Endothelial cell of umbilical vein (primary cell): ENCODE measurements at regions of chr2 and their contacts with region 1.

Region 1: DNA sequence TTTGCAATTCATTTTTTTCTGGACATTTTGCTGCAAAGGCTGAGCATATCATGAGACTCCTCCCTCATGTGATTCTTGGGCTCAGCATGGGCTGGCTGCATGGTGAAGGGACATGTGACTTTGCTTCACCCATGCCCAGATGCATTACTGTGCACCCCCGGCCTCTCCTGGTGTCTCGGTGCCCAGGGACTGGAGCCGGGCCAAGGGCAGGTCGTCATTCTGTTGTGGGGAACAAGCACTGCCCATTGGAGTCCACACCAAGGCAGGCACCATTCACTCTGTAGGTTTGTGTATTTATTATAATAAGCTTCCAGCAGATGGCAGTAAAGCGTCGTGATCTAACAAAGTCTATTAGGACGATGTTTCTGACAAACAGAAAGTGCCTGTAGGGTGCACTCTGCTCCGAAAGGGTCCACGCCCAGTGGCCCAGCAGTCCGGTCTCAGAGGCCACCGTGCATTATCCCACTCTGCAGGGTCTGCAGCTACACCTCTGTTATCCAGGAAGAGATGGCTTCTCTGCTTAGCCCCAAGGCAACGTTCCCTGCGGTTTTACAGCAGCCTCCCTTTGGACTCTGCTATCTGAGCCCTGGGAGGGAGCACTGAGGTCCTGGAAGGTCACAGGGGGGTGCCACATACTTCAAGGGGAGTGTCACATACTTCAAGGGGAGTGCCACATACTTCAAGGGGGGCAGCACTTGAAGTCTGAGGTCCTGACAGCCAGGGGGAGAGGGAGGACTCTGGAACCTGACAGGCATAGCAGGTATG is 219.6 kb downstream of the TSN start:
- DNase-seq: peak; percentile 60
- H3K4me3 ChIP-seq: no peak overlapping the region
- H3K27ac ChIP-seq: no peak overlapping the region
- H3K4me1 ChIP-seq: no peaks in the 10 kb centered on the region
- H3K27me3 ChIP-seq: peaks cover 0 to under 1% of the 10 kb centered on the region in 2 experiments
- CTCF ChIP-seq: peak; percentile 29 to 36
- POLR2A ChIP-seq: no peak

Region 2: GRCh38 chr2:121897335-121897970 is 77.6 kb before region 1 on chr2:
- CTCF ChIA-PET with region 1: no interaction called
- POLR2A ChIA-PET with region 1: no interaction called
- dilution Hi-C with region 1: no loop called
- intact Hi-C with region 1: loop called (anchors 5 kb)
- DNase-seq: peak; percentile 20
- H3K4me3 ChIP-seq: no peak overlapping the region
- H3K27ac ChIP-seq: peak overlapping the region; percentile 73
- H3K4me1 ChIP-seq: peaks cover 12% of the 10 kb centered on the region
- H3K27me3 ChIP-seq: no peaks in the 10 kb centered on the region
- CTCF ChIP-seq: peak; percentile 48 to 72
- POLR2A ChIP-seq: no peak

Region 3: DNA sequence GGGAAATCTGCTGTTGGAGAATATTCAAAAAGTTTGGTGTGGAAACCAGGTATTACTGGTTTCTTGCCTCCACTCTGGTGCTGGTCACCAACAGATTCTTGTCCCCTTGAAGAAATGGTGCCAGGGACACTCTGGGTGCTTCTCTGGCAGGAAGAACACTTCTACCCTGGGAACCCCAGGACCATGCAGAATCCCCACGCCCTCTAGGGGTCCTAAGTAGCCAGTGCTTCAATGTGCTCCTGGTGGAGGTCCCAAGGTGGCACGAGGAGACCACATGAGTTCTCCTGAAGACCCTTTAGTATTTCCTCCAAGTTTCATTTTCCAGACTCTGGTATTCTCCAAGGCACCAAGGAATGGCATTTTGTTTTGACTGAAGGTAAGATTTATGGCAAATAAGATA is 161.0 kb after region 1 on chr2:
- CTCF ChIA-PET with region 1: no interaction called
- POLR2A ChIA-PET with region 1: no interaction called
- dilution Hi-C with region 1: no loop called
- intact Hi-C with region 1: loop called (anchors 2 kb)
- DNase-seq: no peak
- H3K4me3 ChIP-seq: no peak overlapping the region
- H3K27ac ChIP-seq: no peak overlapping the region
- H3K4me1 ChIP-seq: no peaks in the 10 kb centered on the region
- H3K27me3 ChIP-seq: no peaks in the 10 kb centered on the region
- CTCF ChIP-seq: peak in 1 of 2 donors; percentile 58
- POLR2A ChIP-seq: no peak

Region 4: GRCh38 chr2:122156176-122156890 is 181.3 kb after region 1 on chr2:
- CTCF ChIA-PET with region 1: no interaction called
- POLR2A ChIA-PET with region 1: no interaction called
- dilution Hi-C with region 1: no loop called
- intact Hi-C with region 1: no loop called
- DNase-seq: no peak
- H3K4me3 ChIP-seq: no peak overlapping the region
- H3K27ac ChIP-seq: no peak overlapping the region
- H3K4me1 ChIP-seq: no peaks in the 10 kb centered on the region
- H3K27me3 ChIP-seq: no peaks in the 10 kb centered on the region
- CTCF ChIP-seq: no peak
- POLR2A ChIP-seq: no peak

Region 5: DNA sequence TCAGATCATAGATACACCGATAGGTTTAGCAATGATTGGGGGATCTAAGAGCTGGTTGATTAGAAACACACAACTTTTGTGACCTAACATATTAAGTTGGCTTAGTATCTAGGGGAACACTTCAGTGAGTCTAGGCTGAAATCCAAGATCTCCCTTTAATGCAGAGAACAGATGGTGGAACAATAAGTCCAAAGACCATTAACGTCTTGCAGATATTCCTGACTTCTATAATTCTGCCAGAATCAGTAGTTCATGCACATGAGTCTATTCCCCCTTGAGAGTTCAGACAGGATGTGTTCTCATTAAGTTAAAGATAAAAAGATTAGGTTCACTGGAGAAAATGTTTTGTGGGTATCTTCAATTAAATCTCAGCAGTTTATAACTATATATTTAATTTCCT is 286.8 kb after region 1 on chr2:
- CTCF ChIA-PET with region 1: no interaction called
- POLR2A ChIA-PET with region 1: no interaction called
- dilution Hi-C with region 1: no loop called
- intact Hi-C with region 1: no loop called
- DNase-seq: no peak
- H3K4me3 ChIP-seq: no peak overlapping the region
- H3K27ac ChIP-seq: no peak overlapping the region
- H3K4me1 ChIP-seq: no peaks in the 10 kb centered on the region
- H3K27me3 ChIP-seq: no peaks in the 10 kb centered on the region
- CTCF ChIP-seq: no peak
- POLR2A ChIP-seq: no peak

Region 6: GRCh38 chr2:122368576-122369243 is 393.6 kb after region 1 on chr2:
- CTCF ChIA-PET with region 1: no interaction called
- POLR2A ChIA-PET with region 1: no interaction called
- dilution Hi-C with region 1: no loop called
- intact Hi-C with region 1: loop called (anchors 10 kb)
- DNase-seq: no peak
- H3K4me3 ChIP-seq: no peak overlapping the region
- H3K27ac ChIP-seq: no peak overlapping the region
- H3K4me1 ChIP-seq: no peaks in the 10 kb centered on the region
- H3K27me3 ChIP-seq: no peaks in the 10 kb centered on the region
- CTCF ChIP-seq: no peak
- POLR2A ChIP-seq: no peak

Region 7: DNA sequence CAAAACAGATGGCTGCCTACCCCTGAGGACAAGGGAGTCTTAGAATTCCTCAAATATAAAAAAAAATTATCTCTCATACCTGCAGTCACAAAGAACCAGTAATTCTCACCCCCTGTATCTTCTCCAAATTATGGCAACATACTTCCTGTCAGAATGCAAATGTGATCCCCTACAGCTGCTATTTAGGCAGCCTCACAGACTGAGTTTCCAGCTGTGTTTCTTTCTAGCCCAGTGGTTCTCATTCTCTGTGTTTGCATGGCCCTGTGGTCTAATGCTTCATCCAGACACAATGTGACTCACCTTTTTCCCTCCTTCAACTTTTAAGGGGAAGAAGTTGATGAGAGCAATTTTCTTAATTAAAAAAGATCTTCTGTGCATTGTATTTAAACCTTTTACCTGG is 506.6 kb after region 1 on chr2:
- CTCF ChIA-PET with region 1: no interaction called
- POLR2A ChIA-PET with region 1: no interaction called
- dilution Hi-C with region 1: no loop called
- intact Hi-C with region 1: no loop called
- DNase-seq: no peak
- H3K4me3 ChIP-seq: no peak overlapping the region
- H3K27ac ChIP-seq: no peak overlapping the region
- H3K4me1 ChIP-seq: no peaks in the 10 kb centered on the region
- H3K27me3 ChIP-seq: no peaks in the 10 kb centered on the region
- CTCF ChIP-seq: no peak
- POLR2A ChIP-seq: no peak